ENCODE measurements at regions of chr9 and their contacts with region 1.

Region 1: GRCh38 chr9:137672907-137673791 is 54.3 kb downstream of the EHMT1 start:
- DNase-seq: no peak
- ATAC-seq: peak; percentile 91
- H3K4me3 Mint-ChIP-seq: peak overlapping the region; percentile 65
- H3K27ac Mint-ChIP-seq: peak overlapping the region; percentile 82
- H3K4me1 Mint-ChIP-seq: peaks cover 72% of the 10 kb centered on the region
- H3K27me3 Mint-ChIP-seq: no peaks in the 10 kb centered on the region
- CTCF ChIP-seq: peak; percentile 87

Region 2: GRCh38 chr9:137435980-137436760 is 237.0 kb before region 1 on chr9:
- CTCF ChIA-PET with region 1: no interaction called
- POLR2A ChIA-PET with region 1: no interaction called
- intact Hi-C with region 1: no loop called
- DNase-seq: no peak
- ATAC-seq: peak; percentile 62
- H3K4me3 Mint-ChIP-seq: no peak overlapping the region
- H3K27ac Mint-ChIP-seq: no peak overlapping the region
- H3K4me1 Mint-ChIP-seq: no peaks in the 10 kb centered on the region
- H3K27me3 Mint-ChIP-seq: peaks cover 4% of the 10 kb centered on the region
- CTCF ChIP-seq: no peak

Region 3: GRCh38 chr9:137590462-137591383 is 82.4 kb before region 1 on chr9 and contains the start of gene ZMYND19:
- CTCF ChIA-PET with region 1: no interaction called
- POLR2A ChIA-PET with region 1: no interaction called
- intact Hi-C with region 1: no loop called
- DNase-seq: peak; percentile 95
- ATAC-seq: peak; percentile 96
- H3K4me3 Mint-ChIP-seq: peak within 1 kb of the TSS; percentile 98
- H3K27ac Mint-ChIP-seq: peak within 1 kb of the TSS; percentile 92
- H3K4me1 Mint-ChIP-seq: peaks cover 6% of the 10 kb centered on the region
- H3K27me3 Mint-ChIP-seq: peaks cover 1% of the 10 kb centered on the region
- CTCF ChIP-seq: no peak
- total RNA-seq, gene ZMYND19: 21.9 and 25.1 TPM in 2 replicates

Region 4: GRCh38 chr9:137694967-137695879 is 22.1 kb after region 1 on chr9:
- CTCF ChIA-PET with region 1: interaction called, 13 read pairs
- POLR2A ChIA-PET with region 1: interaction called, 3 read pairs
- intact Hi-C with region 1: loop called (anchors 1 kb)
- DNase-seq: no peak
- ATAC-seq: peak; percentile 76
- H3K4me3 Mint-ChIP-seq: no peak overlapping the region
- H3K27ac Mint-ChIP-seq: peak overlapping the region; percentile 37
- H3K4me1 Mint-ChIP-seq: peaks cover 72% of the 10 kb centered on the region
- H3K27me3 Mint-ChIP-seq: no peaks in the 10 kb centered on the region
- CTCF ChIP-seq: no peak

Region 5: GRCh38 chr9:137745541-137745991 is 72.4 kb after region 1 on chr9:
- CTCF ChIA-PET with region 1: interaction called, 6 read pairs
- POLR2A ChIA-PET with region 1: no interaction called
- intact Hi-C with region 1: loop called (anchors 1 kb)
- DNase-seq: peak; percentile 65
- ATAC-seq: peak; percentile 95
- H3K4me3 Mint-ChIP-seq: peak overlapping the region; percentile 60
- H3K27ac Mint-ChIP-seq: peak overlapping the region; percentile 91
- H3K4me1 Mint-ChIP-seq: peaks cover 49% of the 10 kb centered on the region
- H3K27me3 Mint-ChIP-seq: no peaks in the 10 kb centered on the region
- CTCF ChIP-seq: no peak

Region 6: DNA sequence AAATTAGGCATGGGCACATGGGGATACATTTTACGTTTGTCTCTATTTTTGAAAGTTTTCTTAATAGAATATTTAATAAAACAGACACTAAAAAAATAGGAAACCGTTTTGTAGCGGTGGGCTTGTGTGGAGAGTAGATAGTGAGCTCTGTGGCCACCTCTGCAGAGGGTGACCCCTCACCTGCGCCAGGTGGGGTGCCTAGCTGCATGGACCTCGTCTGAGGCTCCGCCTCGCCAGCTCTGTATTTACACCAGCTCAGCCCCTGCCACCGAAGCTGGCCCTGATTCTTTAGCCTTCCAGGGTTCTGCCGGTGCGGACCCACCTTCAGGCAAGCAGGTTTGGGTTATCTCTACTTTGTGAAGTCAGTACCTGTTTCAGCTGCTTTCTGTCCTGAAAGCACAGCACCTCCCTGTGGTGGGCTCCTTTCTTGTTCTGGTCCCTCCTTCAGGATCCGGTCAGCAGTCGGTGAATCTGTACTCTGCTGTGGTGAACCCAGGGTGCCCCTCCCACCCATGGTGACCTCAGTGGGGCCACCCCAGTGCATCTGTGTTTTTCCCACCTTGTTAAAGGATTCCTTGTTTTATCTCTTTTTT is 99.2 kb after region 1 on chr9:
- CTCF ChIA-PET with region 1: interaction called, 12 read pairs
- POLR2A ChIA-PET with region 1: interaction called, 7 read pairs
- intact Hi-C with region 1: loop called (anchors 1 kb)
- DNase-seq: no peak
- ATAC-seq: peak; percentile 31
- H3K4me3 Mint-ChIP-seq: no peak overlapping the region
- H3K27ac Mint-ChIP-seq: peak overlapping the region; percentile 3
- H3K4me1 Mint-ChIP-seq: peaks cover 11% of the 10 kb centered on the region
- H3K27me3 Mint-ChIP-seq: no peaks in the 10 kb centered on the region
- CTCF ChIP-seq: no peak

Region 7: GRCh38 chr9:138020120-138020794 is 347.1 kb after region 1 on chr9:
- CTCF ChIA-PET with region 1: interaction called, 3 read pairs
- POLR2A ChIA-PET with region 1: no interaction called
- intact Hi-C with region 1: loop called (anchors 2 kb)
- DNase-seq: no peak
- ATAC-seq: no peak
- H3K4me3 Mint-ChIP-seq: no peak overlapping the region
- H3K27ac Mint-ChIP-seq: no peak overlapping the region
- H3K4me1 Mint-ChIP-seq: no peaks in the 10 kb centered on the region
- H3K27me3 Mint-ChIP-seq: peaks cover 11% of the 10 kb centered on the region
- CTCF ChIP-seq: no peak